ENCODE measurements at regions of chrX and their contacts with region 1.

Region 1: GRCh38 chrX:43813898-43814297 is 68.4 kb downstream of the MAOB start:
- DNase-seq: peak; percentile 27 to 70
- ATAC-seq: peak; percentile 84 to 92
- H3K4me3 ChIP-seq: no peak overlapping the region
- H3K27ac ChIP-seq: no peak overlapping the region
- H3K4me1 ChIP-seq: peaks cover 8 to 15% of the 10 kb centered on the region in 2 donors
- H3K27me3 ChIP-seq: no peaks in the 10 kb centered on the region
- CTCF ChIP-seq: peak in 4 of 5 experiments; percentile 9 to 32 (median 31)
- POLR2A ChIP-seq: no peak

Region 2: DNA sequence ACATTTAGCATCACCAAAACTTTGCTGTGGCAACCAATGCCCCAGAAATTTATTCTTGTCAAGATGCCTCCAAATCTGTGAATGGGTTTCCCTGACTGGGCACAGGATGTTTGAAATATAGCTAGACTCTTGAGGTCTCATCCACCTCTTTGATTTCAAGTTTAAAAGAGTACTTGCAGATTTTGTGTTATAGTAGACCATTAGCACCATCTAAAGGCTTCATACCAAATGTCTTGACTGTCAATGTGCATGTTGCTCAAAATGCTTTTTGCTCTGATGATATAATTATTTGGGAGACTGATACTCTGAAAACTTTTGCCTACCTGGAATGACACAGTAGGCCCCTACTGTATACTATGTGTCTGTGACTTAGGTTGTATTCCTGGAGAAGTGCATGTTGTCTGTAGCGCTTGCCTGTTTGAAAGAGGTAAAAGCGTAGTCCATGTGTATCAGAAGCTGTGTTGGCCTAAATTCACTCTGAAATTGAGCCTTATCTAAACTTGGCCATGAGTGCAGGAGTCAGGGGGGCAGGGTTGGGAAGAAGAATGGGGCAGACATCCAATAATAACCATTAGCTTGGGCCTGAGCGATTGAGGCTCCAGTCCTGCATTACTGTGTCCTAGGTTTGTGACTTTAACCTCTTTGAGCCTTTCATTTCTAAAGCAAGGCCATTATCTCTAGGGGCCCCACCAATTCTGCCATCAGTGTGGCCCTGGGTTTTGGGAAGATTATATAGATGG is 125.5 kb after region 1 on chrX:
- in situ Hi-C with region 1: no loop called
- intact Hi-C with region 1: loop called (anchors 1 kb)
- DNase-seq: no peak
- ATAC-seq: peak in 1 of 2 donors; percentile 56
- H3K4me3 ChIP-seq: no peak overlapping the region
- H3K27ac ChIP-seq: no peak overlapping the region
- H3K4me1 ChIP-seq: no peaks in the 10 kb centered on the region
- H3K27me3 ChIP-seq: no peaks in the 10 kb centered on the region
- CTCF ChIP-seq: peak in 4 of 5 experiments; percentile 18 to 43 (median 38)
- POLR2A ChIP-seq: no peak

Region 3: GRCh38 chrX:44025555-44025954 is 211.7 kb after region 1 on chrX:
- in situ Hi-C with region 1: no loop called
- intact Hi-C with region 1: loop called (anchors 10 kb)
- DNase-seq: no peak
- ATAC-seq: no peak
- H3K4me3 ChIP-seq: no peak overlapping the region
- H3K27ac ChIP-seq: no peak overlapping the region
- H3K4me1 ChIP-seq: no peaks in the 10 kb centered on the region
- H3K27me3 ChIP-seq: no peaks in the 10 kb centered on the region
- CTCF ChIP-seq: no peak
- POLR2A ChIP-seq: no peak

Measured in gastrocnemius medialis (tissue), 4 donors.